A673 (cell line): ENCODE measurements at regions of chr10 and their contacts with region 1.

Region 1: GRCh38 chr10:94279835-94280709 is 82.7 kb downstream of the NOC3L start:
- DNase-seq: peak; percentile 59
- H3K4me3 ChIP-seq: no peak overlapping the region
- H3K27ac ChIP-seq: no peak overlapping the region
- H3K4me1 ChIP-seq: no peaks in the 10 kb centered on the region
- H3K27me3 ChIP-seq: no peaks in the 10 kb centered on the region
- CTCF ChIP-seq: peak; percentile 95

Region 2: DNA sequence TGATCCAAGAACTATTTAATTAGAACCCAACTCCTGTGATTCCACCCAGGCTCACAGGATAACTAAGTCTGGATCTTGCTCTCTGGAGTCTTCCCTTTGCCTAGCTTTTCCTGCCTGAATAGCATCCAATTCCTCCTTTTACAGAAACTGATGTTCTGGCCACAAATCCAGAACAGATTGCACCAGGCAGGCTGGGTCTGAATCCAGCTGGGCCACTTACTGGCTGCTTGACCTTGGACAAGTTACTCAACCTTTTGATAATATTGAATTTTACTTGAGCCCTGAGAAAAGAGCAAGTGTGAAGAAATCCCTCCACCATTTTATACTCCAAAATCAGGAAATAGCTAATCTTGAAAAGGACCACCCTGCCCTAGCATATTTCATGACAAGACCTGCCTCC is 441.8 kb before region 1 on chr10:
- CTCF ChIA-PET with region 1: no interaction called
- POLR2A ChIA-PET with region 1: no interaction called
- intact Hi-C with region 1: no loop called
- DNase-seq: no peak
- H3K4me3 ChIP-seq: no peak overlapping the region
- H3K27ac ChIP-seq: no peak overlapping the region
- H3K4me1 ChIP-seq: no peaks in the 10 kb centered on the region
- H3K27me3 ChIP-seq: no peaks in the 10 kb centered on the region
- CTCF ChIP-seq: no peak

Region 3: GRCh38 chr10:94303929-94304328 is 23.9 kb after region 1 on chr10:
- CTCF ChIA-PET with region 1: no interaction called
- POLR2A ChIA-PET with region 1: no interaction called
- intact Hi-C with region 1: loop called (anchors 2 kb)
- DNase-seq: no peak
- H3K4me3 ChIP-seq: no peak overlapping the region
- H3K27ac ChIP-seq: no peak overlapping the region
- H3K4me1 ChIP-seq: no peaks in the 10 kb centered on the region
- H3K27me3 ChIP-seq: no peaks in the 10 kb centered on the region
- CTCF ChIP-seq: no peak

Region 4: DNA sequence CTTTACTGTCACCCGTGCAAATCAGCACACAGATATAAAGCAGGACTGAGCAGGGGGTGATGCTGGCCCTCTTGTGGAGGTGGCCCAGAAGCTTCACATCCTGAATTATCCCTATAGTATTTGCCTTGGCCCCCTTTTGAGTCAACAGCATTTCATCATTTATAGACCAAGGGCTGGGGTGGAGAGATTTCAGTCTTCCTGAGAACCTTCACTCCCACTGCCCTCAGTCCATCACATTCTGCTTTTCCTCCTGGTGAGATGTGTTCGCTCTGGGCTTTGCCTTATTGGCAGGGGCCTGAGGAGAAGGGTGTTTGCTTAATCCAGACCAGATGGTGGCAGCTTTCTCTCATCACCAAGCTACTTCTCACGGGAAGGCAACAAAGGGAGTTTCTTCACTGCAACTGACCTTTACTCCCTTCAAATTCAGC is 35.0 kb after region 1 on chr10:
- CTCF ChIA-PET with region 1: no interaction called
- POLR2A ChIA-PET with region 1: no interaction called
- intact Hi-C with region 1: loop called (anchors 5 kb)
- DNase-seq: peak; percentile 11
- H3K4me3 ChIP-seq: no peak overlapping the region
- H3K27ac ChIP-seq: no peak overlapping the region
- H3K4me1 ChIP-seq: peaks cover 10% of the 10 kb centered on the region
- H3K27me3 ChIP-seq: no peaks in the 10 kb centered on the region
- CTCF ChIP-seq: no peak

Region 5: DNA sequence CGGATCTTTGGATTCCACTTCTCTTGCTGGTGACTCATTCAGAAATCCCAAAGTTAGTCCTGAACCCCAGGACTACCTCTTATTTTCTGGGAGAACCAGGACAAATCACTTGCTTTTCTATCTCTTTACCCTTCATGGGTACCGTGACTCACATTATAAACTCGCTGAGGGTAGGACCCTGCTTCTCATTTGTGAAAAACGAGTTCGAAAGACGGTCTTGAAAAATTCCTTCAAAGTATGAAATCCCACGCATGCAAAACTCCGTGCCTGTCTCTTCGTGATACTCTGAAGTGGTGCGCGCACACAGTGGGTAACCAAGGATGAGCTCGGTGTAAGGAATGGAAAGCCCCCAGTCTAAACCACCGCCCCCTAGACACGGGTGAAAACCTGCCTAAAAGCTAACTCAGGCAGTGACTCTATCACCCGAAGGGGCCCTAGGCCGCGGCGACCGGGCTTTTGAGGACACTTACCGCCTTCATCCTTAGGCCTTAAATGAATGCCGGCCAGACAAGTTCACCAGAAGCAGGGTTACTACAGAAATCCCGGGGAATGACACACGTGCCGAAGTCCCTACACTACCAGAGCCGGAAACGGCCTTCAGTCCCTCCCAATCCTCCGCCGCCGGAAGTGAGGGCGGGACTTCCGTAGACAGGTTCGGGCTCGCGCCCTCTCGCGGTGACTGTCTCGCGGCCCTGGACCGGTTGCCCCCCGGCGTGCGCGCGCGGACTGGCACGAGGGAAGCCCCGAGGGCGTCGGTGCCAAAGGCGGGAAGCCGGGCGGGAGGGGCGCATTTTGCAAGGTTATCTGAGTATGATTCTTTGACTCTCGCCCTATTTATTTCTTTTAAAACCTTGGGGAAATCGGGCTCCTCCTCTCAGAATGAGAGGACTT is 82.5 kb after region 1 on chr10 and contains the start of gene NOC3L:
- CTCF ChIA-PET with region 1: no interaction called
- POLR2A ChIA-PET with region 1: no interaction called
- intact Hi-C with region 1: no loop called
- DNase-seq: peak; percentile 97
- H3K4me3 ChIP-seq: peak within 1 kb of the TSS; percentile 74
- H3K27ac ChIP-seq: peak within 1 kb of the TSS; percentile 72
- H3K4me1 ChIP-seq: peaks cover 11% of the 10 kb centered on the region
- H3K27me3 ChIP-seq: no peaks in the 10 kb centered on the region
- CTCF ChIP-seq: peak; percentile 74
- total RNA-seq, gene NOC3L: 36.8 and 48.6 TPM in 2 replicates

Region 6: GRCh38 chr10:94423627-94424026 is 143.6 kb after region 1 on chr10:
- CTCF ChIA-PET with region 1: no interaction called
- POLR2A ChIA-PET with region 1: no interaction called
- intact Hi-C with region 1: no loop called
- DNase-seq: no peak
- H3K4me3 ChIP-seq: no peak overlapping the region
- H3K27ac ChIP-seq: no peak overlapping the region
- H3K4me1 ChIP-seq: no peaks in the 10 kb centered on the region
- H3K27me3 ChIP-seq: no peaks in the 10 kb centered on the region
- CTCF ChIP-seq: no peak

Region 7: GRCh38 chr10:94439275-94439861 is 159.3 kb after region 1 on chr10:
- CTCF ChIA-PET with region 1: no interaction called
- POLR2A ChIA-PET with region 1: no interaction called
- intact Hi-C with region 1: loop called (anchors 1 kb)
- DNase-seq: peak; percentile 12
- H3K4me3 ChIP-seq: no peak overlapping the region
- H3K27ac ChIP-seq: no peak overlapping the region
- H3K4me1 ChIP-seq: no peaks in the 10 kb centered on the region
- H3K27me3 ChIP-seq: peaks cover 6% of the 10 kb centered on the region
- CTCF ChIP-seq: no peak

Region 8: GRCh38 chr10:94623572-94623971 is 343.5 kb after region 1 on chr10:
- CTCF ChIA-PET with region 1: no interaction called
- POLR2A ChIA-PET with region 1: no interaction called
- intact Hi-C with region 1: no loop called
- DNase-seq: no peak
- H3K4me3 ChIP-seq: no peak overlapping the region
- H3K27ac ChIP-seq: no peak overlapping the region
- H3K4me1 ChIP-seq: no peaks in the 10 kb centered on the region
- H3K27me3 ChIP-seq: no peaks in the 10 kb centered on the region
- CTCF ChIP-seq: no peak